T-cell (primary cell): ENCODE measurements at regions of chr10 and their contacts with region 1.

Region 1: GRCh38 chr10:103894441-103894885 is 23.5 kb downstream of the STN1 start:
- DNase-seq: no peak
- ATAC-seq: no peak
- H3K4me3 ChIP-seq: no peak overlapping the region
- H3K4me3 Mint-ChIP-seq: peak overlapping the region in 2 of 3 donors; percentile 25 to 59
- H3K27ac ChIP-seq: peak overlapping the region; percentile 47
- H3K27ac Mint-ChIP-seq: peak overlapping the region; percentile 93 to 96
- H3K4me1 ChIP-seq: peaks cover 0 to 12% of the 10 kb centered on the region in 2 experiments
- H3K4me1 Mint-ChIP-seq: peaks cover 36 to 57% (median 39%) of the 10 kb centered on the region in 3 donors
- H3K27me3 ChIP-seq: no peaks in the 10 kb centered on the region
- H3K27me3 Mint-ChIP-seq: no peaks in the 10 kb centered on the region

Region 2: GRCh38 chr10:104016661-104017060 is 122.2 kb after region 1 on chr10:
- CTCF ChIA-PET with region 1: interaction called in 1 of 2 experiments, 3 read pairs
- POLR2A ChIA-PET with region 1: interaction called in 1 of 2 experiments, 11 read pairs
- DNase-seq: no peak
- ATAC-seq: no peak
- H3K4me3 ChIP-seq: no peak overlapping the region
- H3K4me3 Mint-ChIP-seq: no peak overlapping the region
- H3K27ac ChIP-seq: no peak overlapping the region
- H3K27ac Mint-ChIP-seq: no peak overlapping the region
- H3K4me1 ChIP-seq: no peaks in the 10 kb centered on the region
- H3K4me1 Mint-ChIP-seq: peaks cover 0 to 5% (median 0%) of the 10 kb centered on the region in 3 donors
- H3K27me3 ChIP-seq: no peaks in the 10 kb centered on the region
- H3K27me3 Mint-ChIP-seq: no peaks in the 10 kb centered on the region